ENCODE measurements at regions of chr6 and their contacts with region 1.

Region 1: GRCh38 chr6:26025894-26026832 is 61.1 kb upstream of the HFE start:
- DNase-seq: peak; percentile 86 to 95 (median 94)
- H3K4me3 ChIP-seq: peak overlapping the region; percentile 59
- H3K4me3 Mint-ChIP-seq: peak overlapping the region; percentile 85 to 95 (median 93)
- H3K27ac ChIP-seq: peak overlapping the region; percentile 86
- H3K27ac Mint-ChIP-seq: peak overlapping the region; percentile 93 to 100 (median 98)
- H3K4me1 ChIP-seq: peaks cover 21% of the 10 kb centered on the region
- H3K4me1 Mint-ChIP-seq: peaks cover 30 to 77% (median 55%) of the 10 kb centered on the region in 3 donors
- H3K27me3 ChIP-seq: no peaks in the 10 kb centered on the region
- H3K27me3 Mint-ChIP-seq: peaks cover 0 to 9% of the 10 kb centered on the region in 2 donors

Region 2: DNA sequence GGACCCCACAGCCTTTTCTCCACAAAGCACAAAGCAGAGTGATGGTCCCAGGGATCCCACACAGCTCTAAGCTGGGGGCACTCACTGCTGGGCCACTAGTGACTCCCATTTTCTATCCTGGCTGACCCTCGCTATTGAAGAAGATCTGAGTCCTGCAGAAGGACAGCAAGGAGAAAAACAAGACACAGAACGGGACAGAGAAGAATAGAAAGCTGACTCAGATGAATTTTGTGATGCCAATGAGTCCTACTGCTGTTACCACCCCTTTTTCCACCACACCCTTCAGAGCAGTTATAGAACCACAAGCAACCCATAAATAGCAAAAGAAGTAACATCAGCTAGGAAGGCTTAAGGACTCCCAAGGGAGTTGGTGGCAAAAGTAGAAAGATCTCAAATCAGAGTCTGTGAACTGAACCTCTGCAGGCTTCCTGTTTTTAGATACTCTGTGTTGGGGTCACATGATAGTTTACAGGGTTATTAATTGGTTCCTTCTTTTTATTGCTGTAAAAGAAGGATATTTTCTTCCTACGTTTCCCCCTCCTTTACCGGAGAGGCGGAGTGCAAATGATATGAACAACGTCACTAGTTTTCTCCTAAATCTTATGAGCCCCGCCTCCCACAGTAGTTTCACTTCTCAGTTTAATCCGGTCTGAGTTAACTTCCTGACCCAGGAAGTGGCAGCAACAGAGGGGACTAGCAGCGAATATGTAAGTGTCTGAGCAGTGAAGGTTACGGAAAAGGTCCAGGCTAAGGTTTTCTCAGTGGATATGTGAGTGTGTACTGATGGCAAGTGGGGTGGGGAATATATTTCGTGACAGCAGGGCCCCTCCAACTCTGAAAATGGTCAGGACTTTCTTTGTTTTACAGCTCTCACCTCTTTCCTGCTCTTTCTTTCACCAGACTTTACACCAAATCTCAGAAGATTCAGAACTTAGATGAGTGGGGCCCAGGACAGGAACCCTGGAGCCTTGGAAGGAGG is 63.7 kb before region 1 on chr6 and contains the start of gene TRIM38:
- CTCF ChIA-PET with region 1: interaction called, 3 read pairs
- POLR2A ChIA-PET with region 1: interaction called, 16 read pairs
- DNase-seq: peak; percentile 55 to 84 (median 80)
- H3K4me3 ChIP-seq: peak within 1 kb of the TSS; percentile 84
- H3K4me3 Mint-ChIP-seq: peak within 1 kb of the TSS; percentile 93 to 99 (median 97)
- H3K27ac ChIP-seq: peak within 1 kb of the TSS; percentile 94
- H3K27ac Mint-ChIP-seq: peak within 1 kb of the TSS; percentile 91 to 100 (median 99)
- H3K4me1 ChIP-seq: peaks cover 80% of the 10 kb centered on the region
- H3K4me1 Mint-ChIP-seq: peaks cover 77 to 91% (median 90%) of the 10 kb centered on the region in 3 donors
- H3K27me3 ChIP-seq: no peaks in the 10 kb centered on the region
- H3K27me3 Mint-ChIP-seq: no peaks in the 10 kb centered on the region
- total RNA-seq, gene TRIM38: 10.8 to 11.2 TPM

Region 3: GRCh38 chr6:26003102-26003694 is 23.0 kb before region 1 on chr6:
- CTCF ChIA-PET with region 1: interaction called, 28 read pairs
- POLR2A ChIA-PET with region 1: interaction called, 7 read pairs
- DNase-seq: peak; percentile 17 to 65 (median 28)
- H3K4me3 ChIP-seq: no peak overlapping the region
- H3K4me3 Mint-ChIP-seq: no peak overlapping the region
- H3K27ac ChIP-seq: no peak overlapping the region
- H3K27ac Mint-ChIP-seq: no peak overlapping the region
- H3K4me1 ChIP-seq: no peaks in the 10 kb centered on the region
- H3K4me1 Mint-ChIP-seq: peaks cover 0 to 8% (median 0%) of the 10 kb centered on the region in 3 donors
- H3K27me3 ChIP-seq: no peaks in the 10 kb centered on the region
- H3K27me3 Mint-ChIP-seq: no peaks in the 10 kb centered on the region

Region 4: DNA sequence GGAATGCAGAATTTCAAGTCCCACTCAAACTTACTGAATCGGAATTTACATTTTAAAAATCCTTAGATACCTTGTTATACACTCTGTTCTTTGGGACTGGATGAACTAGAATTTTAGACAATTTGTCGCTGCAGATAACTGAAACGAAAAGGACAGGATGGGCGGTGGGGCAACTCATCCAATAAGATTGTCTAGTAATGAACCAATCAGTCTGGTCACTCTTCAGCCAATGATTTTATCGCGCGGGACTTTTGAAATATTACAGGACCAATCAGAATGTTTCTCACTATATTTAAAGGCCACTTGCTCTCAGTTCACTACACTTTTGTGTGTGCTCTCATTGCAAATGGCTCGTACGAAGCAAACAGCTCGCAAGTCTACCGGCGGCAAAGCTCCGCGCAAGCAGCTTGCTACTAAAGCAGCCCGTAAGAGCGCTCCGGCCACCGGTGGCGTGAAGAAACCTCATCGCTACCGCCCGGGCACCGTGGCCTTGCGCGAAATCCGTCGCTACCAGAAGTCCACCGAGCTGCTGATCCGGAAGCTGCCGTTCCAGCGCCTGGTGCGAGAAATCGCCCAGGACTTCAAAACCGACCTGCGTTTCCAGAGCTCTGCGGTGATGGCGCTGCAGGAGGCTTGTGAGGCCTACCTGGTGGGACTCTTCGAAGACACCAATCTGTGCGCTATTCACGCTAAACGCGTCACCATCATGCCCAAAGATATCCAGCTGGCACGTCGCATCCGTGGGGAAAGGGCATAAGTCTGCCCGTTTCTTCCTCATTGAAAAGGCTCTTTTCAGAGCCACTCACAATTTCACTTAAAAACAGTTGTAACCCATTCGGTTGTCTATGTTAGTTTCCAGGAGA is 19.1 kb after region 1 on chr6:
- CTCF ChIA-PET with region 1: interaction called, 173 read pairs
- POLR2A ChIA-PET with region 1: interaction called, 326 read pairs
- DNase-seq: peak; percentile 58 to 90 (median 85)
- H3K4me3 ChIP-seq: peak overlapping the region; percentile 77
- H3K4me3 Mint-ChIP-seq: peak overlapping the region; percentile 87 to 94 (median 92)
- H3K27ac ChIP-seq: peak overlapping the region; percentile 71
- H3K27ac Mint-ChIP-seq: peak overlapping the region; percentile 94 to 99 (median 98)
- H3K4me1 ChIP-seq: peaks cover 10% of the 10 kb centered on the region
- H3K4me1 Mint-ChIP-seq: peaks cover 20 to 32% (median 30%) of the 10 kb centered on the region in 3 donors
- H3K27me3 ChIP-seq: no peaks in the 10 kb centered on the region
- H3K27me3 Mint-ChIP-seq: no peaks in the 10 kb centered on the region

Region 5: DNA sequence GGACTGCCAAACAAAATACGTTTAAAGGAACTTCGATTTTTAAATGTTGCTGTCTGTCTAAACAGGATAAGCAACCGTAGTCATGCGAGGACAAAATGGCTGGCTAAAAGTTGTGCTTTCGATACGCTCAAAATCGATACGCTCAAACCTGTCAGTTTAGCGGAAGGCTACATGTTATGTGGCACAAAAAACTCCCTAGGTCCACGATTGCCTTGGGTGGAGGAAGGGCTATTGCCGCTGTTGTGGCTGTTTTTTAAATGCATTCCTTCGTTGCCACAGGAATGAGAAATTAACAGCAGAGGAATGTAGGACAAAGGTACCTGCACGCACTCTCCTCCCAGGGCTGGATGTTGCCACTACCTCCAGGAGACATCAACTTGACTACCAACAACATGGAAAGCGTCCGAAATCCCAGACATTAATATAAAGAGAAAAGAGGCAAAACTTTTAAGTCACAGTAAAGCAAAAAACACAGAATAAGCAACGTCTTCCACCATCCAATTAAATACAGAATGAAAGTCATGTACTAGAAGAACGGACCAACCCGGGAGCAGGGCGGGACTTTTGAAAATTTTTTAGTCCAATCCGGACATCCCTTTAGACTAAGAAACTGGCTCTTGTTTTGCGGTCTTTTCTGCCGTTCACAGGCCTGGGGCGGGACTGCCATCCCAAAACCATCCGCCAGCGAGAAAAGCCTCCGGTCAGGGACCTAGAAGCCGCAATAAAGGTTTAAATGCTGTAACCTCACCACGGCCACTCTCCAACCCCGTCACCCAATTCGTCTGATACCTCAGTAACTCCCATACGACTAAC is 28.9 kb after region 1 on chr6:
- CTCF ChIA-PET with region 1: interaction called, 12 read pairs
- POLR2A ChIA-PET with region 1: interaction called, 42 read pairs
- DNase-seq: peak; percentile 74 to 89 (median 86)
- H3K4me3 ChIP-seq: peak overlapping the region; percentile 92
- H3K4me3 Mint-ChIP-seq: peak overlapping the region; percentile 90 to 97 (median 94)
- H3K27ac ChIP-seq: peak overlapping the region; percentile 96
- H3K27ac Mint-ChIP-seq: peak overlapping the region; percentile 90 to 99 (median 97)
- H3K4me1 ChIP-seq: peaks cover 9% of the 10 kb centered on the region
- H3K4me1 Mint-ChIP-seq: peaks cover 17 to 30% (median 26%) of the 10 kb centered on the region in 3 donors
- H3K27me3 ChIP-seq: no peaks in the 10 kb centered on the region
- H3K27me3 Mint-ChIP-seq: peaks cover 0 to 4% of the 10 kb centered on the region in 2 donors

Region 6: GRCh38 chr6:26075063-26075717 is 49.0 kb after region 1 on chr6:
- CTCF ChIA-PET with region 1: no interaction called
- POLR2A ChIA-PET with region 1: no interaction called
- DNase-seq: no peak
- H3K4me3 ChIP-seq: no peak overlapping the region
- H3K4me3 Mint-ChIP-seq: no peak overlapping the region
- H3K27ac ChIP-seq: no peak overlapping the region
- H3K27ac Mint-ChIP-seq: no peak overlapping the region
- H3K4me1 ChIP-seq: no peaks in the 10 kb centered on the region
- H3K4me1 Mint-ChIP-seq: no peaks in the 10 kb centered on the region
- H3K27me3 ChIP-seq: no peaks in the 10 kb centered on the region
- H3K27me3 Mint-ChIP-seq: peaks cover 4 to 6% of the 10 kb centered on the region in 2 donors

Region 7: GRCh38 chr6:26087284-26088115 is 61.3 kb after region 1 on chr6 and contains the start of gene HFE:
- CTCF ChIA-PET with region 1: interaction called, 12 read pairs
- POLR2A ChIA-PET with region 1: interaction called, 20 read pairs
- DNase-seq: peak; percentile 8 to 49 (median 27)
- H3K4me3 ChIP-seq: peak within 1 kb of the TSS; percentile 86
- H3K4me3 Mint-ChIP-seq: peak within 1 kb of the TSS; percentile 88 to 96 (median 91)
- H3K27ac ChIP-seq: peak within 1 kb of the TSS; percentile 70
- H3K27ac Mint-ChIP-seq: peak within 1 kb of the TSS; percentile 78 to 95 (median 89)
- H3K4me1 ChIP-seq: peaks cover 26% of the 10 kb centered on the region
- H3K4me1 Mint-ChIP-seq: peaks cover 31 to 37% (median 36%) of the 10 kb centered on the region in 3 donors
- H3K27me3 ChIP-seq: no peaks in the 10 kb centered on the region
- H3K27me3 Mint-ChIP-seq: no peaks in the 10 kb centered on the region
- total RNA-seq, gene HFE: 0.37 to 1.1 TPM

Region 8: DNA sequence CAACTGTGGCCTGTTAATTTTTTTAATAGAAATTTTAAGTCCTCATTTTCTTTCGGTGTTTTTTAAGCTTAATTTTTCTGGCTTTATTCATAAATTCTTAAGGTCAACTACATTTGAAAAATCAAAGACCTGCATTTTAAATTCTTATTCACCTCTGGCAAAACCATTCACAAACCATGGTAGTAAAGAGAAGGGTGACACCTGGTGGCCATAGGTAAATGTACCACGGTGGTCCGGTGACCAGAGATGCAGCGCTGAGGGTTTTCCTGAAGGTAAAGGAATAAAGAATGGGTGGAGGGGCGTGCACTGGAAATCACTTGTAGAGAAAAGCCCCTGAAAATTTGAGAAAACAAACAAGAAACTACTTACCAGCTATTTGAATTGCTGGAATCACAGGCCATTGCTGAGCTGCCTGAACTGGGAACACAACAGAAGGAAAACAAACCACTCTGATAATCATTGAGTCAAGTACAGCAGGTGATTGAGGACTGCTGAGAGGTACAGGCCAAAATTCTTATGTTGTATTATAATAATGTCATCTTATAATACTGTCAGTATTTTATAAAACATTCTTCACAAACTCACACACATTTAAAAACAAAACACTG is 71.2 kb after region 1 on chr6:
- CTCF ChIA-PET with region 1: interaction called, 10 read pairs
- POLR2A ChIA-PET with region 1: no interaction called
- DNase-seq: peak; percentile 42 to 74 (median 59)
- H3K4me3 ChIP-seq: no peak overlapping the region
- H3K4me3 Mint-ChIP-seq: peak overlapping the region in 1 of 7 donors; percentile 14
- H3K27ac ChIP-seq: no peak overlapping the region
- H3K27ac Mint-ChIP-seq: peak overlapping the region in 1 of 8 donors; percentile 50
- H3K4me1 ChIP-seq: no peaks in the 10 kb centered on the region
- H3K4me1 Mint-ChIP-seq: peaks cover 1 to 5% (median 4%) of the 10 kb centered on the region in 3 donors
- H3K27me3 ChIP-seq: no peaks in the 10 kb centered on the region
- H3K27me3 Mint-ChIP-seq: peaks cover 0 to 2% of the 10 kb centered on the region in 2 donors

Measured in CD8-positive, alpha-beta memory T cell (primary cell).